GM12878 (cell line): ENCODE measurements at regions of chr1 and their contacts with region 1.

Region 1: DNA sequence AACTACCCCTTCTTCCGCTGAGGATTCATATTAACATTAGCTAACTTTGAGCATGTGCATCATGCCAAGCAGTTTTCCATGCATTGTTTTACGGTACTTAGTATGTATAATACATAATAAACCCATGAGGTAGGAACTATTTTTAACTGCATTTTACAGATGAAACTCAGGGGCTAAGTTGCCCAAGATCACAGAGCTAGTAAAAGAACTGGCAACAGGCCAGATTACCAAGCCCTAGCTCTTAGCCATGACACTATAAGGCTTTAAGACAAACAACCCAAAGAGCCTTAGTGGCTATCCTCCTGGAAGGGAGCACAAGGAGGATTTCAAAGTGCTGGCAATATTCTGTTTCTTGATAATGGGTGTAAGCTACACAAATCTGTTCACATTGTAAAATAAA is 6.1 kb downstream of the AK2 start:
- DNase-seq: no peak
- ATAC-seq: no peak
- H3K4me3 ChIP-seq: no peak overlapping the region
- H3K27ac ChIP-seq: no peak overlapping the region
- H3K4me1 ChIP-seq: peaks cover 20% of the 10 kb centered on the region
- H3K27me3 ChIP-seq: no peaks in the 10 kb centered on the region
- CTCF ChIP-seq: no peak
- EP300 ChIP-seq: no peak
- POLR2A ChIP-seq: no peak
- RAD21 ChIP-seq: no peak

Region 2: GRCh38 chr1:32964461-32965250 is 65.9 kb before region 1 on chr1 and contains the start of gene RNF19B:
- CTCF ChIA-PET with region 1: interaction called, 5 read pairs
- POLR2A ChIA-PET with region 1: interaction called, 5 read pairs
- RAD21 ChIA-PET with region 1: interaction called, 8 read pairs
- SMC1A ChIA-PET with region 1: interaction called, 14 read pairs
- in situ Hi-C with region 1: no loop called
- intact Hi-C with region 1: loop called (anchors 5 kb)
- DNase-seq: peak; percentile 77
- ATAC-seq: peak; percentile 93
- H3K4me3 ChIP-seq: peak within 1 kb of the TSS; percentile 79
- H3K27ac ChIP-seq: peak within 1 kb of the TSS; percentile 27
- H3K4me1 ChIP-seq: peaks cover 4% of the 10 kb centered on the region; the same call in 1 of the 2 replicates
- H3K27me3 ChIP-seq: no peaks in the 10 kb centered on the region
- CTCF ChIP-seq: no peak
- EP300 ChIP-seq: peak in 1 of 2 experiments; percentile 14; a peak in 1 of 4 replicates
- POLR2A ChIP-seq: peak; percentile 95
- RAD21 ChIP-seq: no peak
- polyA plus RNA-seq, gene RNF19B: 4.3 to 9.1 TPM

Region 3: GRCh38 chr1:33429856-33430691 is 399.5 kb after region 1 on chr1:
- CTCF ChIA-PET with region 1: no interaction called
- POLR2A ChIA-PET with region 1: no interaction called
- RAD21 ChIA-PET with region 1: no interaction called
- SMC1A ChIA-PET with region 1: no interaction called
- in situ Hi-C with region 1: no loop called
- intact Hi-C with region 1: no loop called
- DNase-seq: no peak
- ATAC-seq: no peak
- H3K4me3 ChIP-seq: peak overlapping the region; percentile 68
- H3K27ac ChIP-seq: no peak overlapping the region
- H3K4me1 ChIP-seq: peaks cover 10% of the 10 kb centered on the region
- H3K27me3 ChIP-seq: peaks cover 3 to 6% of the 10 kb centered on the region in 2 experiments
- CTCF ChIP-seq: no peak
- EP300 ChIP-seq: no peak
- POLR2A ChIP-seq: no peak
- RAD21 ChIP-seq: no peak